IMR-90 (cell line): ENCODE measurements at regions of chr17 and their contacts with region 1.

Region 1: GRCh38 chr17:4948931-4949320 is 596 bp upstream of the PFN1 start:
- DNase-seq: peak; percentile 89
- ATAC-seq: peak; percentile 62
- H3K4me3 ChIP-seq: peak overlapping the region; percentile 98
- H3K27ac ChIP-seq: peak overlapping the region; percentile 91
- H3K4me1 ChIP-seq: peaks cover 38% of the 10 kb centered on the region
- H3K27me3 ChIP-seq: no peaks in the 10 kb centered on the region
- CTCF ChIP-seq: no peak
- POLR2A ChIP-seq: no peak; the same call in 1 of the 2 replicates
- RAD21 ChIP-seq: no peak

Region 2: GRCh38 chr17:4966844-4967538 is 18.1 kb after region 1 on chr17:
- CTCF ChIA-PET with region 1: no interaction called
- POLR2A ChIA-PET with region 1: interaction called, 19 read pairs
- dilution Hi-C with region 1: no loop called
- in situ Hi-C with region 1: no loop called
- intact Hi-C with region 1: loop called (anchors 1 kb)
- DNase-seq: peak; percentile 100
- ATAC-seq: peak; percentile 85
- H3K4me3 ChIP-seq: peak overlapping the region; percentile 58
- H3K27ac ChIP-seq: peak overlapping the region; percentile 87
- H3K4me1 ChIP-seq: peaks cover 14% of the 10 kb centered on the region
- H3K27me3 ChIP-seq: no peaks in the 10 kb centered on the region
- CTCF ChIP-seq: no peak
- POLR2A ChIP-seq: no peak
- RAD21 ChIP-seq: no peak

Region 3: DNA sequence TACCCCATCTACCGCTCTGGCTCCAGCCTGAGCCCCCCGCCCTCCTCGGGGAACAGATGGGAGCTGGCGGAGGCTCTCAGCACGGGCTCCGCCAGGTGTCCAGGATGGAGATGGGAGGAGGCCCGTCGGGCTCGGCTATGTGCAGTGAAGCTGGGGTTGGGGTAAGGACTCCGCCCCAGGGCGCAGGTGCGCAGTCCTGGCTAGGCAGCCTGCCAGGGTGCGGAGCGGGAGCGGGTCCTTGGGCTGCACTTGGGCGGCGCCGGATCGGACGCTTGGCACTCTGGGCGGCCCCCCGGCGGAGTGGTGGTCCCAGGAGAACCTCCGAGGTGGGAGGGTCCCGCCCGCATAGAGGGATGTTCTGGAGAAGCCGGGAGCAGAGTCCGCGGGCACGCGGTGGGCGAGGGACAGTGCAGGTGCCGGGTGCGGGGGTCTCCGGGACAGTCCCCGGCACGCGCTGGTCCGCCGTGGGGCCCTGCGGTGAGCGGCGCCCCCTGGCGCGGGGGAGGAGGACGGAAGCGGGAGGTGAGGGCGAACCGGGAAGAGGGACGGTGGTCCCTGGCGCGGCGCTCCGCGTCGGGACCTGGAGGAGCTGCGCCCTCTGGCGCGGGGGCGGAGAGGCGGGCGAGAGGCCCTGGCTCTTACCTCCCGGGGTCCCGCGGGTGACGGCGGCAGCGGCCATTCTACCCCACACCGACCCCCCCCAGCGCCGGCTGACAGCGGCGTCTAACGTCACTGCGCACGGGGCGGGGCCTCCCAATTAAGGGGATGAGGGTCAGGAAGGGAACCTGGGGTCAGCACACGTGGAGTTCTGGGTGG is 38.2 kb after region 1 on chr17 and contains the start of gene CAMTA2:
- CTCF ChIA-PET with region 1: no interaction called
- POLR2A ChIA-PET with region 1: interaction called, 4 read pairs
- dilution Hi-C with region 1: no loop called
- in situ Hi-C with region 1: no loop called
- intact Hi-C with region 1: loop called (anchors 1 kb)
- DNase-seq: peak; percentile 56
- ATAC-seq: peak; percentile 94
- H3K4me3 ChIP-seq: peak within 1 kb of the TSS; percentile 72
- H3K27ac ChIP-seq: peak within 1 kb of the TSS; percentile 72
- H3K4me1 ChIP-seq: peaks cover 7% of the 10 kb centered on the region
- H3K27me3 ChIP-seq: no peaks in the 10 kb centered on the region
- CTCF ChIP-seq: peak; percentile 71
- POLR2A ChIP-seq: no peak
- RAD21 ChIP-seq: peak; percentile 46
- total RNA-seq, gene CAMTA2: 1.4 TPM in 2 replicates

Region 4: GRCh38 chr17:4997302-4998026 is 48.5 kb after region 1 on chr17 and contains the starts of genes INCA1 and KIF1C:
- CTCF ChIA-PET with region 1: no interaction called
- POLR2A ChIA-PET with region 1: interaction called, 11 read pairs
- dilution Hi-C with region 1: no loop called
- in situ Hi-C with region 1: no loop called
- intact Hi-C with region 1: no loop called
- DNase-seq: peak; percentile 82
- ATAC-seq: peak; percentile 95
- H3K4me3 ChIP-seq: peak within 1 kb of the TSS; percentile 96
- H3K27ac ChIP-seq: peak within 1 kb of the TSS; percentile 98
- H3K4me1 ChIP-seq: peaks cover 21% of the 10 kb centered on the region
- H3K27me3 ChIP-seq: no peaks in the 10 kb centered on the region
- CTCF ChIP-seq: no peak
- POLR2A ChIP-seq: no peak
- RAD21 ChIP-seq: no peak
- total RNA-seq, gene INCA1: under 0.01 and 0.18 TPM in 2 replicates
- total RNA-seq, gene KIF1C: 27.4 and 28.6 TPM in 2 replicates